ENCODE measurements at regions of chr15 and their contacts with region 1.

Region 1: DNA sequence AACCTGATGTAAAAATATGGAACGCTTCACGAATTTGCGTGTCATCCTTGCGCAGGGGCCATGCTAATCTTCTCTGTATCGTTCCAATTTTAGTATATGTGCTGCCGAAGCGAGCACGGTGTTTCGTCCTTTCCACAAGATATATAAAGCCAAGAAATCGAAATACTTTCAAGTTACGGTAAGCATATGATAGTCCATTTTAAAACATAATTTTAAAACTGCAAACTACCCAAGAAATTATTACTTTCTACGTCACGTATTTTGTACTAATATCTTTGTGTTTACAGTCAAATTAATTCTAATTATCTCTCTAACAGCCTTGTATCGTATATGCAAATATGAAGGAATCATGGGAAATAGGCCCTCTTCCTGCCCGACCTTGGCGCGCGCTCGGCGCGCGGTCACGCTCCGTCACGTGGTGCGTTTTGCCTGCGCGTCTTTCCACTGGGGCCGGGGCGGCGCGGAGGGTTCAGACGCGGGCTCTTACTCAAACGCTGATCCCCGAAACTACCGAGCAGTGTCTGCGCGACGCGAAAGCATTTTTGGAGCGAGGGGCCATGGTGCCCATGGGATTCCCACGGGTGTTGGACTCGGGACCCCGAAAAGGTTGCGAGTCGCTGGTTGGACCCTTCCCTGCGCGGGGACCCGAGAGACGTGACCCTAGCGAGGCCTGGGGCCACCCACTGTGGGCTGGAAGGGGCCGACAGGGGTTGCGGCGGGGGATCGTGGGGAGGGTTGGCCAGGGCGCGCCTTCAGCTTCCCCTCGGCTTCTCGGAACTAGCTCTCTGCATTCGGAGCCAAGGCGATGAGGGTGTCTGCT is at the start of gene RNU6-1:
- DNase-seq: peak; percentile 84
- ATAC-seq: peak; percentile 62
- H3K4me3 ChIP-seq: peak within 1 kb of the TSS; percentile 96
- H3K27ac ChIP-seq: peak within 1 kb of the TSS; percentile 29
- H3K4me1 ChIP-seq: peaks cover 17% of the 10 kb centered on the region
- H3K27me3 ChIP-seq: peaks cover 9% of the 10 kb centered on the region
- CTCF ChIP-seq: no peak
- total RNA-seq, gene RNU6-1: not detected in 2 replicates

Region 2: GRCh38 chr15:67385971-67386370 is 454.2 kb before region 1 on chr15:
- CTCF ChIA-PET with region 1: no interaction called
- POLR2A ChIA-PET with region 1: no interaction called
- intact Hi-C with region 1: loop called (anchors 5 kb)
- DNase-seq: no peak
- ATAC-seq: no peak
- H3K4me3 ChIP-seq: no peak overlapping the region
- H3K27ac ChIP-seq: no peak overlapping the region
- H3K4me1 ChIP-seq: no peaks in the 10 kb centered on the region
- H3K27me3 ChIP-seq: no peaks in the 10 kb centered on the region
- CTCF ChIP-seq: no peak

Region 3: GRCh38 chr15:67456677-67457529 is 383.2 kb before region 1 on chr15:
- CTCF ChIA-PET with region 1: no interaction called
- POLR2A ChIA-PET with region 1: no interaction called
- intact Hi-C with region 1: loop called (anchors 1 kb)
- DNase-seq: peak; percentile 82
- ATAC-seq: peak; percentile 91
- H3K4me3 ChIP-seq: no peak overlapping the region
- H3K27ac ChIP-seq: no peak overlapping the region
- H3K4me1 ChIP-seq: no peaks in the 10 kb centered on the region
- H3K27me3 ChIP-seq: no peaks in the 10 kb centered on the region
- CTCF ChIP-seq: peak; percentile 81

Region 4: GRCh38 chr15:67501177-67501835 is 338.8 kb before region 1 on chr15:
- CTCF ChIA-PET with region 1: no interaction called
- POLR2A ChIA-PET with region 1: no interaction called
- intact Hi-C with region 1: loop called (anchors 1 kb)
- DNase-seq: peak; percentile 46
- ATAC-seq: peak; percentile 80
- H3K4me3 ChIP-seq: no peak overlapping the region
- H3K27ac ChIP-seq: no peak overlapping the region
- H3K4me1 ChIP-seq: no peaks in the 10 kb centered on the region
- H3K27me3 ChIP-seq: no peaks in the 10 kb centered on the region
- CTCF ChIP-seq: peak; percentile 54

Region 5: DNA sequence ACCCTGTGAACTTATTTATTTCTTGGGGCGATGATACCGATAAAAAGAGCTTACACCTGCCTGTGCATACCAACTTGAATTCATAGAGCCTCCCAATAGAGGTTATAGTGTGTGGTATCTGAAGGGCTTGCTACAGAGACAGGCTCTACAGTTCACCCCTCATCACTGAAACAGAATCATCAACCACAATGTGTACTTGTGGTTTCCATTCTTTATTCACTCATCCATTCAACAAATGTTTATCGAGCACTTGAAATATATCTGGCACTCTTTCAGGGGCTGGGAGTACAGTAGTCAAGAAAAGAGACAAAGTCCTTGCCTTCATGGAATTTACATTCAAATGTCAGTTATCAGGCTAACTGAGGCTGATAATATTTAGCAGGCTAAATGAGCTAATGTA is 149.2 kb before region 1 on chr15:
- CTCF ChIA-PET with region 1: no interaction called
- POLR2A ChIA-PET with region 1: no interaction called
- intact Hi-C with region 1: loop called (anchors 10 kb)
- DNase-seq: peak; percentile 79
- ATAC-seq: peak; percentile 100
- H3K4me3 ChIP-seq: no peak overlapping the region
- H3K27ac ChIP-seq: no peak overlapping the region
- H3K4me1 ChIP-seq: peaks cover 4% of the 10 kb centered on the region; the same call in 1 of the 2 replicates
- H3K27me3 ChIP-seq: no peaks in the 10 kb centered on the region
- CTCF ChIP-seq: no peak

Region 6: DNA sequence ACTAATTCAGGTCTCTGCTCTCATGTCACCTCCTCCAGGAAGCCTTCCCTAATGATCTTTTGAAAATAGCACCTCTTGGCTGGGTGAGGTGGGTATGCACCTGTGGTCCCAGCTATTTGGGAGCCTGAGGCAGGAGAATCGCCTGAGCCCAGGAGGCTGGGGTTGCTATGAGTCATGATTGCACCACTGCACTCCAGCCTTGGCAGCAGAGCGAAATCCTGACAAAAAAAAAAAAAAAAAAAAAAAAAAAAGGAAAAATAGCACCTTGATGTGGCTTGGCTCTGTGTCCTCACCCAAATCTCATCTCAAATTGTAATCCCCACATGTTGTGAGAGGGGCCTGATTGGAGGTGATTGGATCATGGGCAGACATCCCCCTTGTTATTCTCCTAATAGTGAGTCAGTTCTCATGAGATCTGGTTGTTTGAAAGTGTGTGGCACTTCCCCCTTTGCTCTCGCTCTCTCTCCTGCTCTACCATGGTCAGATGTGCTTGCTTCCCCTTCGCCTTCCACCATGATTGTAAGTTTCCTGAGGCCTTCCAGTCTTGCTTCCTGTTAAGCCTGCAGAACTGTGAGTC is 10.9 kb after region 1 on chr15:
- CTCF ChIA-PET with region 1: no interaction called
- POLR2A ChIA-PET with region 1: no interaction called
- intact Hi-C with region 1: no loop called
- DNase-seq: peak; percentile 45
- ATAC-seq: no peak
- H3K4me3 ChIP-seq: no peak overlapping the region
- H3K27ac ChIP-seq: no peak overlapping the region
- H3K4me1 ChIP-seq: no peaks in the 10 kb centered on the region
- H3K27me3 ChIP-seq: no peaks in the 10 kb centered on the region
- CTCF ChIP-seq: no peak